PC-3 (cell line): ENCODE measurements at regions of chr4 and their contacts with region 1.

Region 1: GRCh38 chr4:55444827-55445226 is 49.1 kb downstream of the TMEM165 start:
- DNase-seq: peak; percentile 67
- ATAC-seq: peak; percentile 23; the same call in 1 of the 2 replicates
- H3K4me3 ChIP-seq: no peak overlapping the region
- H3K27ac ChIP-seq: no peak overlapping the region
- H3K4me1 ChIP-seq: peaks cover 23% of the 10 kb centered on the region
- H3K27me3 ChIP-seq: no peaks in the 10 kb centered on the region
- CTCF ChIP-seq: peak; percentile 77

Region 2: DNA sequence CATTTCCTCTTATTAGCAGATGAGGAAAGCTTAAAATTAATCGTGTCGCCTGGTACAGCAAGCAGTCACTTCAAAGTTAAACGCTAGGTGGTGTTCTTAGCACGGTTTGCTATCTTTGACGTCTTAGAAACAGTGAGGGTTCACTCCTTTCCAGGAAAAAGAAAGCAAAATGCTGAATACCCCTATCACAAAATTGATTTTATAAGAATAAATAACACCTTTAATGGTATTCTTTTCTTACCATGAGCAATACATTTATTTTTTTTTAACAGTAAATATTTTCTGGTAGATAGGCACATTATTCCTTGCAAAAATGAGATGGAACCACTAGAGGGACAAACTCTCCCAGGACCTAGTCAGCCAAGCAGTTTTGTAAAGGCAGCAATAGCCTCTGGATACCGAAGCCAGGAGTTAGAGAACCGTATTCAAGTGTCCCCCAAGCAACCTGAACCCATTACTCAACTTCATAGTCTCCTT is 473.3 kb before region 1 on chr4:
- CTCF ChIA-PET with region 1: interaction called, 3 read pairs
- POLR2A ChIA-PET with region 1: no interaction called
- intact Hi-C with region 1: loop called (anchors 5 kb)
- DNase-seq: peak; percentile 75
- ATAC-seq: peak; percentile 93
- H3K4me3 ChIP-seq: no peak overlapping the region
- H3K27ac ChIP-seq: no peak overlapping the region
- H3K4me1 ChIP-seq: no peaks in the 10 kb centered on the region
- H3K27me3 ChIP-seq: peaks cover 4% of the 10 kb centered on the region; the same call in 1 of the 2 replicates
- CTCF ChIP-seq: peak; percentile 98

Region 3: GRCh38 chr4:55524844-55525571 is 80.2 kb after region 1 on chr4:
- CTCF ChIA-PET with region 1: no interaction called
- POLR2A ChIA-PET with region 1: no interaction called
- intact Hi-C with region 1: no loop called
- DNase-seq: no peak
- ATAC-seq: no peak
- H3K4me3 ChIP-seq: no peak overlapping the region
- H3K27ac ChIP-seq: no peak overlapping the region
- H3K4me1 ChIP-seq: no peaks in the 10 kb centered on the region
- H3K27me3 ChIP-seq: no peaks in the 10 kb centered on the region
- CTCF ChIP-seq: no peak

Region 4: DNA sequence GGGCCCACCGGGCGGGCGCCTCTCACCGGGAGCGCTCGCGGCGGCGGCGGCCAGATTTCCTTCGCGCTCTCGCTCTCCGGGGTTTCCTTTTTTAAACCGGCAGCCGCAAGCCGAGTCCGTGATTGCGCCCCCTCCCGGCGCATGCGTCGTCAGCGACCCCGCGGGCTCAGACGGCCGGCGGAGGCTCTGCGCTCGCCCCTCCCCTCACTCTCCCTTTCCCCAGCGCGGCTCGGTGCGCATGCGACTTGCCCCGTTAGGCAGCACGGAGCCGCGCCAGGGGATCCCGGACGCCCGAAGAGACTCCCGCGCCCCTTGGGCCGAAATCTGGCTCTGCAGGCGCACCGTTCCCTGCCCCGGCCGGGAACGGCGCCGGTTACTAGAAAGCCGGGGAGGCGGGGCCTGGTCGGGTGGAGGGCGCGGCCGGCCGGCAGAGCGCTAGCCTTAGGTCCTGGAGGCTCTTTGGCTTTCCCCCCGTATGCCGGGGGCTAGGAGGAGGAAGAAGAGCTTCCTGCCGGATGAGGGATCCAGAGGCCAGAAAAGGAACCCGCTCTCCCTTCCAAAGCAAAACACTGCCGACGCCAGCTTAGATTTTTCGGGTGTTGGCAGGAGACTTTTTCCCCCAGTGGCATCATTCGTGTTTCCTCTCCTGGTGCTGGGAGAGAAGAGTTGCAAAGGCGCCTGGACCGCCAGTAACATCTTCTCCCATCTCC is 102.1 kb after region 1 on chr4 and contains the start of gene CLOCK:
- CTCF ChIA-PET with region 1: no interaction called
- POLR2A ChIA-PET with region 1: no interaction called
- intact Hi-C with region 1: loop called (anchors 2 kb)
- DNase-seq: peak; percentile 87
- ATAC-seq: peak; percentile 49
- H3K4me3 ChIP-seq: peak within 1 kb of the TSS; percentile 86
- H3K27ac ChIP-seq: peak within 1 kb of the TSS; percentile 85
- H3K4me1 ChIP-seq: peaks cover 60% of the 10 kb centered on the region
- H3K27me3 ChIP-seq: no peaks in the 10 kb centered on the region
- CTCF ChIP-seq: peak; percentile 59
- total RNA-seq, gene CLOCK: 36.3 and 39.7 TPM in 2 replicates

Region 5: GRCh38 chr4:55635741-55636655 is 191.2 kb after region 1 on chr4 and contains the start of gene NMU:
- CTCF ChIA-PET with region 1: interaction called, 4 read pairs
- POLR2A ChIA-PET with region 1: no interaction called
- intact Hi-C with region 1: loop called (anchors 2 kb)
- DNase-seq: peak; percentile 79
- ATAC-seq: peak; percentile 84
- H3K4me3 ChIP-seq: peak within 1 kb of the TSS; percentile 69
- H3K27ac ChIP-seq: no peak within 1 kb of the TSS
- H3K4me1 ChIP-seq: peaks cover 13% of the 10 kb centered on the region
- H3K27me3 ChIP-seq: no peaks in the 10 kb centered on the region
- CTCF ChIP-seq: peak; percentile 43; the same call in 1 of the 2 replicates
- total RNA-seq, gene NMU: 28.5 and 40.2 TPM in 2 replicates

Region 6: GRCh38 chr4:55661398-55662056 is 216.7 kb after region 1 on chr4:
- CTCF ChIA-PET with region 1: no interaction called
- POLR2A ChIA-PET with region 1: no interaction called
- intact Hi-C with region 1: no loop called
- DNase-seq: no peak
- ATAC-seq: no peak
- H3K4me3 ChIP-seq: no peak overlapping the region
- H3K27ac ChIP-seq: no peak overlapping the region
- H3K4me1 ChIP-seq: no peaks in the 10 kb centered on the region
- H3K27me3 ChIP-seq: peaks cover 18% of the 10 kb centered on the region; the same call in 1 of the 2 replicates
- CTCF ChIP-seq: no peak

Region 7: GRCh38 chr4:55866973-55867574 is 422.2 kb after region 1 on chr4:
- CTCF ChIA-PET with region 1: no interaction called
- POLR2A ChIA-PET with region 1: no interaction called
- intact Hi-C with region 1: loop called (anchors 2 kb)
- DNase-seq: peak; percentile 79
- ATAC-seq: peak; percentile 79
- H3K4me3 ChIP-seq: no peak overlapping the region
- H3K27ac ChIP-seq: peak overlapping the region; percentile 41
- H3K4me1 ChIP-seq: peaks cover 28% of the 10 kb centered on the region
- H3K27me3 ChIP-seq: no peaks in the 10 kb centered on the region
- CTCF ChIP-seq: peak; percentile 95